ENCODE measurements at regions of chr6 and their contacts with region 1.

Region 1: GRCh38 chr6:111997078-111997852 is 56.6 kb upstream of the CCN6 start:
- DNase-seq: peak in 1 of 2 donors; percentile 83
- H3K4me3 ChIP-seq: peak overlapping the region in 1 of 2 donors; percentile 6
- H3K27ac ChIP-seq: peak overlapping the region in 1 of 2 donors; percentile 51
- H3K4me1 ChIP-seq: no peaks in the 10 kb centered on the region
- H3K27me3 ChIP-seq: no peaks in the 10 kb centered on the region
- CTCF ChIP-seq: peak; percentile 85 to 89 (median 88)

Region 2: DNA sequence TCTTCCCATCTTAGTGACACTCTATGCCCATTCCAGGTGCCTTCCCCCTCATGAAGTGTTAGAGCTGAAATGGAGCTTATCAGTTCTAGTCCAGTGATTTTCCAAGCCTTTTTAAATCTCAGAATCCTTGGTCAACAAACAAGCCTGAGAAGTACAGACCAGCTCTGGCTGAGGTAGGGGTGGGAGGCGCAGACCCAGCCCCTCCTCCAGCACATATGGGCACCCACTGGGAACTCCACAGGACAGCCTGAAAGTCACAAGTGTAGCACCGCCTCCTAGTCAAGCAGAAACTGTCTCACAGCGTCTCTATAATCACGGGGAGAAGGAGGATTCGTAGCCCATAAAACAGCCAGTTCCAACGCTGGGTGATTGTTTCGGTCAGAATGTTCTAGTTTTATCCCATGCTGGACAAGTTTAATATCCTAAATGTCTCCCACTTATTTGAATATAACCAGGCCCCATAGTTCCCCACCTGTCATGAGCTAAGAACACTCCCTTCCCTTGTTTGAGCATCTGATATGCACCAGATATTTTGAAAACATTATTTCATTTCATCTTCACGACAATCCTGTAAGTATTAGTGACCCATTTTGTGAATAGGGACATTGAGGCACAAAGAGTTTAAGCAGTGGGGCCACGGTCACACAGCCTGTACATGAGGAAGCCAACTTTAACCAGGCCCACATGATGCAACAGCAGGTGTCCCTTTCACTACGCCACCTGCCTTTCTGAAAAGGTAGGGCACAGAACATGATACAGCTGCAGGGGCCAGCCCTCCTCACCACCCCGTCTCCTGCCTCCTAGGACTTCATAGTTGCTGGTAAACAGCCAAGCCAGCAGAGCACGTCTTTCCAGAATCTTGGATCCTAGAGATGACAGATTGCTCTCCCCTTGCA is 431.7 kb before region 1 on chr6:
- intact Hi-C with region 1: no loop called
- DNase-seq: no peak
- H3K4me3 ChIP-seq: no peak overlapping the region
- H3K27ac ChIP-seq: peak overlapping the region; percentile 55 to 84
- H3K4me1 ChIP-seq: peaks cover 5 to 17% of the 10 kb centered on the region in 2 donors
- H3K27me3 ChIP-seq: no peaks in the 10 kb centered on the region
- CTCF ChIP-seq: no peak

Region 3: DNA sequence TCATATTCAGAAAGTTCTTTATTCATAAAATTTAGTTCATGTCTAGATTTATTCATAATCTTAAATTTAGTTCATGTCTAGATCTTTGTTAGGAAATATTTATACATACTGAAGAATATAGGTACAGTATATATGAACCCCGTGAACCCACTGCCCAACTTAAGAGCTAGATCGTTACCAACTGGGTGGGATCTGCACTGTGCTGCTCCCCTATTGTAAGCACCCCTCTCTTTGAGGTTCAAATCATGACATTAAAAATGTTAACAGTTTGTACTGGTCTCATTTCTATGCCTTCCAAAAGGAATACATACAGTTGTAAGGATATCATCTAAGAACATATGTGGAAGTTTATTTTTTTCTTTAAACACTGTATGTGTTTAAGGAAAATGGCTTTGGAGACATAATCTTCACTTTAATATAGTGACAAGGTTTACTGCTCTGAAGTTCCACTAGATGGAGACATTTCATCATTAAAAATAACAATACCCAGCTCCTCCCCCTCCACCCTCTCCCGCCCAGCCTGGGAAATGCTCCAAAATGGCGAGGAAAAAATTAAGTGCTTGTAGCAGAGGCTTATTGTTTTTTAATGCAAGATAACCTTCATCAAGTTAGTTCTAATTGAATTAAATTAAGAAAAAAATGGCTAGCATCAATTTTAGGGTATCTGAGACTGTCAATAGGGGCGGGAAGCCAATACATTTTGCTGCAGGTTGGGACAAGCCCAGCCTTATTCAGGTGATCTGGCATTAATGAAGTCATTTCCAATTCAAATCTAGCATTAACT is 287.5 kb before region 1 on chr6:
- intact Hi-C with region 1: loop called (anchors 1 kb)
- DNase-seq: peak in 1 of 2 donors; percentile 78
- H3K4me3 ChIP-seq: peak overlapping the region in 1 of 2 donors; percentile 46
- H3K27ac ChIP-seq: no peak overlapping the region
- H3K4me1 ChIP-seq: peaks cover 0 to 6% of the 10 kb centered on the region in 2 donors
- H3K27me3 ChIP-seq: no peaks in the 10 kb centered on the region
- CTCF ChIP-seq: peak; percentile 58 to 79 (median 77)

Region 4: DNA sequence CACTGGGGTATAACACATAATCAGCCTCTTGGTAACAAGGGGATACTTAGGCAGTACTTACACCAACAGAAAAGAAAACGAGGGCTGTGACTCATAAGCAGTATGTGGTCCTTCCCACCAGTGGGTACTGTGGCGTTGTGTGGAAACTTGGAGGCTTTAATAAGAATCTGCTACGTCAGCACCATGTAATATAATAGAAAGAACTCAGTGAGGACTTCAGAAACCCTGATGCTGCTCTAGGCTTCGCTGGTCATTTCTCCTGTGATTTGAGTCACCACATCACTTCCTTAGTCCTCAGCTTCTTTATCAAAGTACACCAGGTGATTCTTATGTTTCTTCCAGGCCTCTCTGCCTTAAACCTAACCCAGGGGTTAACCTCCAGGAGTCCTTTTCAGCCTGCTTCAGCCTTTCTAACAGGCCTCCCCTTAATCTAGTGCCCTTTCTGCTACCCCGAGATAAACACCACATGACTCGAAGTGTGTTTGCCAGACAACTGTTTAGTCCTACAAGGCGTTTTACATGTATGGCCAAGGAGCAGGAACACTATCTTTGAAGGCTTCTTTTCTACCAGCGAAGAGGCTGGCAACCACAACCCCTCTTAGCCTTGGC is 192.5 kb before region 1 on chr6:
- intact Hi-C with region 1: loop called (anchors 2 kb)
- DNase-seq: no peak
- H3K4me3 ChIP-seq: no peak overlapping the region
- H3K27ac ChIP-seq: peak overlapping the region; percentile 4 to 39
- H3K4me1 ChIP-seq: peaks cover 0 to 5% of the 10 kb centered on the region in 2 donors
- H3K27me3 ChIP-seq: no peaks in the 10 kb centered on the region
- CTCF ChIP-seq: peak in 2 of 3 experiments; percentile 7 to 31

Region 5: DNA sequence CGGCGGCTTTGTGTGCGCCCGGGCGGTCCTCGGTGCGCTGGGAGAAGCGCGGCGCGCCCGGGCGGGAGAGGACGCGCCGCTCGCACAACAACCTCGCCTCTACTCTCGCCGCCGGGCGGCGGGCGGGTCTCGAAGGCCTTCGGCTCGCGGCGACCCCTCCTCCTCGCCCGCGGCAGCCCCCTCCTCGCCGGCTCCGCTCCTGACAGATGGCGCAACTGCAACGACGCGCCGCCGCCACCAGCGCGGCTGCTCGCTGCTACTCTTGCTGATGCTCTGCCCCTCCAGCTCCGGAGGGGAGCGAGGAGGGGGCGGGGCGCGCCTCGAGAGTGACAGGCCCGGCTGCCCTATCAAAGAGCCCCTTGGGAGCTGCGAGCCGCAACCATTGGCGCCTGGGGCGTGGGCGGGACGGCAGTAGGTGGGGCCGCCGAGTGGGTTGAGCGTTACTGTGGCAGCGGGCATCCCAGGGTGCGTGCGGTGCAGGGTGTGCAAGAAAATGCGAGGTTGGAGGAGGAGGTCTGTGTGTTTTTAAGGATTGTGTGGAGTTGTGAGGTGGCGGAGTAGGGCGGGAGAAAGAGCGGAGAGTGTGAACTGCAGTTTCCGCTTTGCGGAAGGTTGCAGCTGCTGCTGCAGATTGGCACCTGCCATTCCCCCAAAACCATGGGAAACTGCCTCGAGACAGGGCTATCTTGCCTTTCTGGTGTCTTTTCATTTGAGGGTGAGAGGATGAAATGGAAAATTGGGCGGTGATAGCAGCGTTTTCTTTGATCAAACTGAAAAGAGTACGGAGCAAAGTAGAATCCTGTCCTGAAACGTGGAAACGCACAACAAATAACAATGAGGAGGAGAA is 123.9 kb before region 1 on chr6 and contains the start of gene FYN:
- intact Hi-C with region 1: loop called (anchors 2 kb)
- DNase-seq: peak; percentile 93 to 99
- H3K4me3 ChIP-seq: peak within 1 kb of the TSS; percentile 79 to 83
- H3K27ac ChIP-seq: peak within 1 kb of the TSS; percentile 67 to 74
- H3K4me1 ChIP-seq: peaks cover 0 to 5% of the 10 kb centered on the region in 2 donors
- H3K27me3 ChIP-seq: no peaks in the 10 kb centered on the region
- CTCF ChIP-seq: peak; percentile 39 to 72 (median 53)
- total RNA-seq, gene FYN: 141 TPM

Region 6: GRCh38 chr6:111973118-111973761 is 24.0 kb before region 1 on chr6:
- intact Hi-C with region 1: loop called (anchors 2 kb)
- DNase-seq: peak; percentile 16 to 83
- H3K4me3 ChIP-seq: peak overlapping the region; percentile 14 to 37
- H3K27ac ChIP-seq: peak overlapping the region; percentile 54 to 59
- H3K4me1 ChIP-seq: peaks cover 2 to 5% of the 10 kb centered on the region in 2 donors
- H3K27me3 ChIP-seq: no peaks in the 10 kb centered on the region
- CTCF ChIP-seq: no peak

Measured in ascending aorta (tissue), 2 donors.